ENCODE measurements at regions of chr6 and their contacts with region 1.

Region 1: DNA sequence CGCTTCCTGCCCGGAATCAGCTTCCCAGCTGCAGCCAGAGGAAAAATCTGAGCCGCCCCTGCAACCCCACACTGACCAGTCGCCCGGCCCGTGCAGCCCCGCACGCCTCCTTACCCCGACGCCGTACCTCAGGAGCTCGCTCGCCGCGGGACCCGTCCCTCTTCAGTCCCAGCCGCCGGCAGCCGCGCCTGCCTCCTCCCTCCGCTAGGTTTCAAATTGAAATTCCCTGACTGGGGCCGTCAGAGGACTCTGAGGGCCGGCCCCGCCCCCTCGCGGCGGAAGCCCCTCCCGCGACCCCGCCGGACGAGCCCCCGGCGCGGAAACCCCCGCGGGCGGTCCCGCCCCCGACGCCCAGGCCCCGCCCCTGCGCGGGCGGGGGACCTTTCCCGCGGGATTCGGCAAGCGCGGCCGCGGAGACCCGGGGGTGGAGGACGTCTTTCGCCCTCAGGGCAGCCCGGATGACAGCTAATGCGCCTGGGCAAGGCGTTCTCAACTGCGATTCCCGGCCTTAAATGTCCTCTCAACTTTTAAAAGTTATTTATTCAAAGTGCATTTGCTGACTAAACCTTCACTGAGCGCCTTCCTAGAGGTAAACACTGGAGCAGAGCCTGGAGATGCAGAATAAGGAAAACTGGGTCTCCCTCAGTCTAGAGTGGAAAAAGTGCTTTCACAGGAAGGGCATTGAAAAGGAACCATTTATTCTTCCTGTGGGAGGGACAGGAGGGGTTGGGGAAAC is at the start of gene EPB41L2:
- DNase-seq: peak; percentile 64 to 74
- ATAC-seq: peak; percentile 87 to 89
- H3K4me3 ChIP-seq: peak within 1 kb of the TSS; percentile 77 to 97 (median 86)
- H3K27ac ChIP-seq: peak within 1 kb of the TSS; percentile 62 to 83 (median 74)
- H3K4me1 ChIP-seq: peaks cover 4 to 5% of the 10 kb centered on the region in 2 donors
- H3K27me3 ChIP-seq: no peaks in the 10 kb centered on the region
- CTCF ChIP-seq: peak in 4 of 5 experiments; percentile 27 to 46 (median 35)
- POLR2A ChIP-seq: peak; percentile 72 to 92
- total RNA-seq, gene EPB41L2: 11.6 to 24.0 (median 14.6) TPM

Region 2: DNA sequence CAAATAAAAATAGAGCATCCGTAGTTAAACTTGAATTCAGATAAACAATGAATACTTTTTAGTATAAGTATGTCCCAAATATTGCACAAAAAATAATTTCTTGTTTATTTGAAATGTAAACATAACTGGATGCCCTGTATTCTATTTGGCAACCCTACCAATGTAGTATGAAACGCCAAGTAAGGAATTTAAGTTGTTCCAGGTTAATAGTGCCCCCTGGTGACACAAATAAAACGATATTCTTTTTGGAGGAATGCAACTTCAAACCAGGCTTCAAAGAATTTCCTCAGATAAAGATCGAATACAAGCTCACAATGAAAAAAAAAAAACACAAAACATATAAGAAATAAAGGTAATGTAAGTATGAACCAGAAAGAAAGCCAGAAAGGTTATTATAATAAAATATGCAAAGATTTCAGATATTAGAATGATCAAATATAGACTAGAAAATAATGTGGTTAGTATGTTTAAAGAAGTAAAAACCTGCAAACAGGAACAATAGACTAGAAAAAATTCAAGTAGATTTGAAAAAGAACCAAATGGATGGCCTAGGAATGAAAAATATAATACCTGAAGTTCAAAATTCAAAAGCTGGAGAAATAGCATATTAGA is 53.7 kb after region 1 on chr6:
- in situ Hi-C with region 1: no loop called
- intact Hi-C with region 1: loop called (anchors 5 kb)
- DNase-seq: no peak
- ATAC-seq: no peak
- H3K4me3 ChIP-seq: no peak overlapping the region
- H3K27ac ChIP-seq: no peak overlapping the region
- H3K4me1 ChIP-seq: no peaks in the 10 kb centered on the region
- H3K27me3 ChIP-seq: no peaks in the 10 kb centered on the region
- CTCF ChIP-seq: peak; percentile 21 to 57 (median 39)
- POLR2A ChIP-seq: no peak

Region 3: DNA sequence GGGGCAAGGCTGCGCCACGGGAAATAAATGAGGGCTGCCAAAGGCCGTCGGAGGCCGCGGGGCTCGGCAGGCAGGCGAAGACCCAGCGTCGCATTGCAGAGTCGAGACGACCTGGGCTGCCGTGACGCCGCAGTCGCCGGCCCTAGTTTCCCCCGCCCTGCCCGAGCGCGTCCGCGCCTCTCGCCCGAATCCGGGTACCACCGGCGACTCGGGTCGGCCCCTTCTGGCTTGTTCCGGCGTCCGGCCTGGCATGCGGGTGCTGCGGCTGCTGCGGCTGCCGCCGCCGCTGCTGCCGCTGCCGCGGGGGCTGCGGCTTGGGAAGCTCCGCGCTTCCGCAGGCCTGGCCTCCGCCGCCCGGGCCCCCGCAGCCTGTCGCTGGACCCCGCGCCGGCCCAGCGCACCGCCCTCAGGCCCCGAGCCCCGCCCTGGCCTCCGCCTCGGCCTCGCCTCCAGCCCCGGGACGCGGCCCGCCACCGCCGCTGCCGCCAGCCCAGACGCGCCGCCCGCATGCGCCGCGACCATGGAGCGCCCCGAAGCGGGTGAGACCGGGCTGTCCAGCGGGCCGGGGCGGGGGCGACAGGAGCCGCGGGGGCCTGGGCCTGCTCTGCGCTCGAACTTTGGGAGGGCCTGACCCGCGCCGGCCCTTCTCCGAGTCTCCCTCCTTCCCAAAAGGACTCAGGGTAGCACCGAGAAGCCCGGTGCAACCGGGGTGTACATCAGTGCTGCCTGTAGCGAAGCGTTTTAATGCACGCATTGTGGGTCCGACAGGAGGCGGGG is 72.2 kb after region 1 on chr6 and contains the start of gene AKAP7:
- in situ Hi-C with region 1: no loop called
- intact Hi-C with region 1: loop called (anchors 2 kb)
- DNase-seq: peak; percentile 36 to 62
- ATAC-seq: peak; percentile 75 to 82
- H3K4me3 ChIP-seq: peak within 1 kb of the TSS; percentile 68 to 93 (median 83)
- H3K27ac ChIP-seq: peak within 1 kb of the TSS; percentile 76 to 89 (median 86)
- H3K4me1 ChIP-seq: peaks cover 8 to 12% of the 10 kb centered on the region in 2 donors
- H3K27me3 ChIP-seq: no peaks in the 10 kb centered on the region
- CTCF ChIP-seq: no peak
- POLR2A ChIP-seq: peak; percentile 17 to 48
- total RNA-seq, gene AKAP7: 5.2 to 14.6 (median 7.5) TPM